MCF 10A (cell line): ENCODE measurements at regions of chr10 and their contacts with region 1.

Region 1: DNA sequence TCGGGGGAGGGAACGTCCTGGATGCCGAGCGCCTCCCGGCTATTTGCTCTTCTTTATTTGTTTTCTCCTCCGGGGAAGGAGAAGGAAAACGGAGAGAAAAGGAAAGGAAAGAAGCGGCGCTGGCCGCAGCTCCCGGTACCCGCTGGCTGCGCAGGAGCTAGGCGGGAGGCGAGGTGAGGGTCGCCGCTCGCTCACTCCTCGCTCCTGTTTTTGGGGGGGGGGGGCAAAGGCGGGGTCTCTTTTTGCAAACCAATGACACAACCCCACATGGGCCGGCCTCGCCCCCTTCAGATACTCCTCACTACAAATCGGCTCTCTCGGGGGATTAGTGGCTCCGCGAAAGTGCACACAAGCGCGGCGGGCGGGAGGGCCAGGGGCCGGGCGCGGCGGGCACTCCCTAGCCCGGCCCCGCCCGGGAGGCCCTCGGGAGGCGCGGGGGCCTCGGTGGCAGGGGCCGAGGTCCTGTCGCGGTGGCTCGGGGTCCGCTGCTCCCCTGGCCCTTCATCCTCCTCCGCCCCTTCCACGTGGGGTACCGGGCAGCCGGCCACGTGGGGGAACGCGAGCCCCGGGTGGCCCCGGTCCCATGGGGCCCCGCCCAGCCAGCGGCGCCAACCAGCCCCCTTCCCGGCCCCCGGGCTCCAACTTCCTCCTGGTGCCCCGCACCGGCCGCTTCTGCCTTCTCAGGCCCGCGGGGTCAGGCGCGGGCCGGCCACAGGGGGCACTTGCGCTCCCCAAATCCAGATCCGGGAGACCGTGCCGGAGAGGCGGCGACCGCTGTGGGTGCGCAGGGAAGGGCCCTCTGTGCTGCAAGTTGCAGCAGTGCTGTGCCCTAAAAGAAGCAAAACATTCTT is 718 bp upstream of the CTBP2 start:
- DNase-seq: peak; percentile 89
- H3K4me3 Mint-ChIP-seq: peak overlapping the region; percentile 82
- H3K27ac Mint-ChIP-seq: peak overlapping the region; percentile 27
- H3K4me1 Mint-ChIP-seq: peaks cover 8% of the 10 kb centered on the region
- H3K27me3 Mint-ChIP-seq: no peaks in the 10 kb centered on the region
- CTCF ChIP-seq: peak; percentile 58

Region 2: GRCh38 chr10:125060826-125061556 is 100.1 kb before region 1 on chr10:
- CTCF ChIA-PET with region 1: interaction called, 4 read pairs
- POLR2A ChIA-PET with region 1: interaction called, 28 read pairs
- intact Hi-C with region 1: loop called (anchors 5 kb)
- DNase-seq: peak; percentile 75
- H3K4me3 Mint-ChIP-seq: peak overlapping the region; percentile 19
- H3K27ac Mint-ChIP-seq: peak overlapping the region; percentile 73
- H3K4me1 Mint-ChIP-seq: peaks cover 46% of the 10 kb centered on the region
- H3K27me3 Mint-ChIP-seq: no peaks in the 10 kb centered on the region
- CTCF ChIP-seq: peak; percentile 72

Region 3: GRCh38 chr10:125089469-125089868 is 71.6 kb before region 1 on chr10:
- CTCF ChIA-PET with region 1: no interaction called
- POLR2A ChIA-PET with region 1: interaction called, 13 read pairs
- intact Hi-C with region 1: loop called (anchors 5 kb)
- DNase-seq: no peak
- H3K4me3 Mint-ChIP-seq: no peak overlapping the region
- H3K27ac Mint-ChIP-seq: peak overlapping the region; percentile 31
- H3K4me1 Mint-ChIP-seq: peaks cover 47% of the 10 kb centered on the region
- H3K27me3 Mint-ChIP-seq: no peaks in the 10 kb centered on the region
- CTCF ChIP-seq: no peak

Region 4: GRCh38 chr10:125123476-125124114 is 37.5 kb before region 1 on chr10:
- CTCF ChIA-PET with region 1: interaction called, 4 read pairs
- POLR2A ChIA-PET with region 1: interaction called, 165 read pairs
- intact Hi-C with region 1: loop called (anchors 5 kb)
- DNase-seq: peak; percentile 99
- H3K4me3 Mint-ChIP-seq: peak overlapping the region; percentile 65
- H3K27ac Mint-ChIP-seq: peak overlapping the region; percentile 93
- H3K4me1 Mint-ChIP-seq: peaks cover 76% of the 10 kb centered on the region
- H3K27me3 Mint-ChIP-seq: no peaks in the 10 kb centered on the region
- CTCF ChIP-seq: no peak

Region 5: DNA sequence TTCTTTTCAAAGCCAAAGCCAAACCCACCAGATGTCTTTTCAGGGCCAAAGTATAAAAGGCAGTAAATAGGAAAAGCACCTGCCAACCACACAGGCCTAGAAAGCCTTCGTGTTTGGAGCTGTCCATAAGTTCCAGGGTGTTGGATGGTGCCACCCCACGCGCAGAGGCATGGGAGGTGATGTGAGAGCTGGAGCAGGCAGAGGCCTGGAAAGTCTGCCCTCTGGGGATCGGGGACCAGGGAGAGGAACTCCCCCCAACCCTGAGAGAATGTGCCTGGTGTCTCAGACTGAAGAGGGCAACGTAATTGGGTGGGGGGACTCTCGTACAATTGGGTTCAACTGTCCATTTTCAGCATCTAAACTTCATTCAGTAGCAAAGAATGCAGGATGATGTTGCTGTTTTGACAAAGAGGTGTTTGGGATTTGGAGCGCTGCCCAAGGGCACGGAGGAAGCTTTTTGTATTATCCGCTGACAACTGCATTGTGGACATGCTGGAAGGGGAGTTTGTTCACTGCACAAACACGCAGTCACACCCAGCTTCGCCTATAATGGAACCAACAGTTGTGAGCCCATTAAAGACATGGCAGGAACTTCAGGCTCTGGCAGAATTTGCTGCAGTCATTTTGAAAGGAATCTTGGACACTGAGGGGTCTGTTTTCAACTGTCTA is 17.0 kb after region 1 on chr10:
- CTCF ChIA-PET with region 1: no interaction called
- POLR2A ChIA-PET with region 1: no interaction called
- intact Hi-C with region 1: no loop called
- DNase-seq: no peak
- H3K4me3 Mint-ChIP-seq: no peak overlapping the region
- H3K27ac Mint-ChIP-seq: no peak overlapping the region
- H3K4me1 Mint-ChIP-seq: no peaks in the 10 kb centered on the region
- H3K27me3 Mint-ChIP-seq: peaks cover 15% of the 10 kb centered on the region
- CTCF ChIP-seq: no peak

Region 6: GRCh38 chr10:125343118-125343925 is 182.2 kb after region 1 on chr10:
- CTCF ChIA-PET with region 1: interaction called, 3 read pairs
- POLR2A ChIA-PET with region 1: no interaction called
- intact Hi-C with region 1: loop called (anchors 1 kb)
- DNase-seq: peak; percentile 45
- H3K4me3 Mint-ChIP-seq: no peak overlapping the region
- H3K27ac Mint-ChIP-seq: no peak overlapping the region
- H3K4me1 Mint-ChIP-seq: peaks cover 8% of the 10 kb centered on the region
- H3K27me3 Mint-ChIP-seq: no peaks in the 10 kb centered on the region
- CTCF ChIP-seq: peak; percentile 44

Region 7: GRCh38 chr10:125629763-125630376 is 468.8 kb after region 1 on chr10:
- CTCF ChIA-PET with region 1: interaction called, 4 read pairs
- POLR2A ChIA-PET with region 1: interaction called, 5 read pairs
- intact Hi-C with region 1: loop called (anchors 1 kb)
- DNase-seq: peak; percentile 63
- H3K4me3 Mint-ChIP-seq: no peak overlapping the region
- H3K27ac Mint-ChIP-seq: no peak overlapping the region
- H3K4me1 Mint-ChIP-seq: no peaks in the 10 kb centered on the region
- H3K27me3 Mint-ChIP-seq: peaks cover 57% of the 10 kb centered on the region
- CTCF ChIP-seq: peak; percentile 49